ENCODE measurements at regions of chr16 and their contacts with region 1.

Region 1: GRCh38 chr16:10964039-10964890 is 19.9 kb downstream of the CLEC16A start:
- DNase-seq: peak; percentile 93
- ATAC-seq: peak; percentile 40
- H3K4me3 Mint-ChIP-seq: peak overlapping the region; percentile 59
- H3K27ac Mint-ChIP-seq: peak overlapping the region; percentile 98
- H3K4me1 Mint-ChIP-seq: peaks cover 74% of the 10 kb centered on the region
- H3K27me3 Mint-ChIP-seq: no peaks in the 10 kb centered on the region

Region 2: GRCh38 chr16:10944249-10945064 is 19.8 kb before region 1 on chr16 and contains the start of gene CLEC16A:
- CTCF ChIA-PET with region 1: interaction called, 121 read pairs
- POLR2A ChIA-PET with region 1: no interaction called
- intact Hi-C with region 1: no loop called
- DNase-seq: peak; percentile 98
- ATAC-seq: peak; percentile 77
- H3K4me3 Mint-ChIP-seq: peak within 1 kb of the TSS; percentile 95
- H3K27ac Mint-ChIP-seq: peak within 1 kb of the TSS; percentile 80
- H3K4me1 Mint-ChIP-seq: peaks cover 69% of the 10 kb centered on the region
- H3K27me3 Mint-ChIP-seq: no peaks in the 10 kb centered on the region
- total RNA-seq, gene CLEC16A: 23.5 to 25.4 TPM

Region 3: GRCh38 chr16:10988164-10988803 is 24.0 kb after region 1 on chr16:
- CTCF ChIA-PET with region 1: interaction called, 20 read pairs
- POLR2A ChIA-PET with region 1: interaction called, 4 read pairs
- intact Hi-C with region 1: loop called (anchors 1 kb)
- DNase-seq: peak; percentile 91
- ATAC-seq: peak; percentile 88
- H3K4me3 Mint-ChIP-seq: peak overlapping the region; percentile 46
- H3K27ac Mint-ChIP-seq: peak overlapping the region; percentile 92
- H3K4me1 Mint-ChIP-seq: peaks cover 89% of the 10 kb centered on the region
- H3K27me3 Mint-ChIP-seq: no peaks in the 10 kb centered on the region

Region 4: DNA sequence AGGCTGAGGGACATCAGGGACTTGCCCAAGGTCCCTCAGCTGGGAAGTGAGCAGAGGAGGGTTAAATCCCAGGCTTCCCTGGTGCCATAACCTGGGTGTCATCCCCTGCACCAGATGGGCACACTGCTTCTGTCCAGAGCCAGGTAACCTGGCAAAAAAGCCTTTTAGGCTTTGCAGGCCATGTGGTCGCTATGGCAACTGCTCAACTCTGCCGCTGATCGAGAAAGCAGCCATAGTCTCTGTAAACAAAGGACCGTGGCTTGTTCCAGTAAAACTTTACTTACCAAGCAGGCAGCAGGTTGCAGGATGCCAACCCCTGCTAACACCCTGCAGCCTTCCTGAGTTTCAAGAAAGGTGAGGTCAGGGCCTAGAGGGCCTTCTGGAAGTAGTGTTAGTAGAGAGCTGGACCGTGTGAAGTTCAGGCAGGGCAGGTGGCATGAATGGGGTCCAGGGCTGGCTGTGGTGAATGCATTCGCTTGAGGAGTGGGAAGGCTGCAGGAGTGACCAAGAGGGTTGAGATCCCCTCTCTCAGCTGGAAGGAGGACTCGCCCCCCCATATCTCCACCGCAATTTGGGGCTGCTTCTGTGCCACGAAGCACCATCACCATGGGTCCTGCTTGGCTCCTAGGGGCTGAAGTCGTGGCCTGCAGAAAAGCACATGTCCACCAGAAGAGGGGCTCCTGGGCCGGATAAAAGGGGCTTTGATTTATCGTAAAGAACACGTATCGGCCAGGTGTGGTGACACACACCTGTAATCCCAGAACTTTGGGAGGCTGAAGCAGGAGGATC is 200.4 kb after region 1 on chr16:
- CTCF ChIA-PET with region 1: interaction called, 5 read pairs
- POLR2A ChIA-PET with region 1: no interaction called
- intact Hi-C with region 1: loop called in 1 of 2 experiments (anchors 5 kb)
- DNase-seq: no peak
- ATAC-seq: no peak
- H3K4me3 Mint-ChIP-seq: no peak overlapping the region
- H3K27ac Mint-ChIP-seq: no peak overlapping the region
- H3K4me1 Mint-ChIP-seq: peaks cover 28% of the 10 kb centered on the region
- H3K27me3 Mint-ChIP-seq: no peaks in the 10 kb centered on the region

Region 5: DNA sequence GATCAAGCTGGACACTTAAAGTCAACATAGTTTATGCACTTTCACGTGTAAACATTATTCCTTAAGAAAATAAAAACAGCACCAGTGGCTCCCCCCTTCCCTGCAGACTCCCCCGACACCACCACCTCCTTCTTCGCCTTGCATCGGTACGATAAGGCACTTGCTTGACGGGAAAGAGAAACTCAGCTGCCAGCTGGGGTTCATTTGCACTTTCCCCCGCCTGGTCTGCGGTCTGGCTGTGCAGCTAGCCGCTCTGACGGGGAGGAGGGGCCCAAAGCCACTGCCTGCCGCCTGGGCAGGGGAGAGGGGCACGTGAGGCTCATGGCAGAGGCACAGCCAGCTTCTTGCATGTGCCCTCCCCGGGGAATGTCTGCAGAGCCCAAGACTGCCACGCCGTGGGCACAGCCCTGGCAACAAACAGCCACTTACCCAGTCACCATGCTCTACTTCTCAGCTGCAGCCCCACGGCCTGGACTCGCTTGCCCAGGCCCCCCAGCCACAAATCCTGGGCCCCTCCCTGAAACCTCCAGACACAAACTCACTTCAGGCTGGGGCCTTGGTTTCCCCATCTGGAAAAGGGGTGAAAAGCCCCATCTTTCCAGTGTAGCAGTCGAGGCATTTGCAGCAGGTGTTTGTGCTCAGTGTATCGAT is 333.4 kb after region 1 on chr16:
- CTCF ChIA-PET with region 1: interaction called, 15 read pairs
- POLR2A ChIA-PET with region 1: no interaction called
- intact Hi-C with region 1: no loop called
- DNase-seq: peak; percentile 84
- ATAC-seq: peak; percentile 81
- H3K4me3 Mint-ChIP-seq: peak overlapping the region; percentile 59
- H3K27ac Mint-ChIP-seq: peak overlapping the region; percentile 78
- H3K4me1 Mint-ChIP-seq: peaks cover 28% of the 10 kb centered on the region
- H3K27me3 Mint-ChIP-seq: no peaks in the 10 kb centered on the region

Region 6: DNA sequence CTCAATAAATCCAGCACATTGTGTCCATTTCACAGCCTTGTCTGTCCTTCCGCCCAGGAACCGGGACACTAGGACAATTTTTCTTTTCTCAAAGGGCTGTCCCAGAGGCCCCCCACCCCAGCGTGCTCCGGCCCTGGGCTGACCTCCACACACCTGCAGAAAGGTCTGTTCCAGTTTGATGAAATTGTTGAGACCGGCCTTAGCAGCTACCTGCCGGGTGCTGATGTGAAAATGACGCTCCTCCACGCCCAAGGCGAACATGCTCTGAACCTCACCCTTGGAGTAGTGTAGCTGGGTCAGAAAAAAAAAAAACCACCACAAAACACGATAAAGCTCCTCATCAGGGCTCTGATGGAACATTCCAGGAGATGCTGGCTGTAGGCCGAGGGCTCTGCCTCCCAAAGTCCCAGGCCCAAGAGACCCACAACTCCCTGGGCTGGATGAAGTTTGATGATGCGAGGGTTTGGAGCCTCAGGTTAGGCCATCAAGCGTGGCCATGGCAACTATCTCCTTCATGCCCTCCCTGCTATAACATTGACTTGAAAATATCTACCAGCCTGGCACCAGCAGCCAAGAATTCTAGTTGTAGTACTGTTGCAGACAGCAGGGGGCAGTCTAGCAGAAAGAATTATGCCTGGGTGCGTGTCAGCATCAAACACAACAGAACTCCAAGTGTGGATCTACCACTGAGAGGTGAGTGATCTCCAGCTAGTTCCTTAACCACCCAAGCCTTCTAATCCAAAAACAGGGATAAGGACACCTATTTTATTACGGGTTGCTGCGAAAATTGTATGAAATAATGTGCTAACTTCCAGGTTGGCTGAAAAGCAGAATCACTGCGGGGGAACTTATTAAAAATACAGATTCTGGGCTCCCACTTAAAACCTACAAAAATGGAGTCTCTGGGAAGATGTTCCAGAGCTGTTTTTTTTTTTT is 443.1 kb after region 1 on chr16:
- CTCF ChIA-PET with region 1: interaction called, 13 read pairs
- POLR2A ChIA-PET with region 1: no interaction called
- intact Hi-C with region 1: loop called (anchors 1 to 10 kb)
- DNase-seq: peak; percentile 81
- ATAC-seq: peak; percentile 74
- H3K4me3 Mint-ChIP-seq: no peak overlapping the region
- H3K27ac Mint-ChIP-seq: no peak overlapping the region
- H3K4me1 Mint-ChIP-seq: no peaks in the 10 kb centered on the region
- H3K27me3 Mint-ChIP-seq: no peaks in the 10 kb centered on the region

Region 7: GRCh38 chr16:11586856-11587642 is 622.8 kb after region 1 on chr16 and contains the start of gene LITAF:
- CTCF ChIA-PET with region 1: no interaction called
- POLR2A ChIA-PET with region 1: no interaction called
- intact Hi-C with region 1: loop called (anchors 5 to 10 kb)
- DNase-seq: peak; percentile 74
- ATAC-seq: peak; percentile 53
- H3K4me3 Mint-ChIP-seq: peak within 1 kb of the TSS; percentile 89
- H3K27ac Mint-ChIP-seq: peak within 1 kb of the TSS; percentile 90
- H3K4me1 Mint-ChIP-seq: peaks cover 32% of the 10 kb centered on the region
- H3K27me3 Mint-ChIP-seq: no peaks in the 10 kb centered on the region
- total RNA-seq, gene LITAF: 99.0 to 116 TPM